ENCODE measurements at regions of chr6 and their contacts with region 1.

Region 1: DNA sequence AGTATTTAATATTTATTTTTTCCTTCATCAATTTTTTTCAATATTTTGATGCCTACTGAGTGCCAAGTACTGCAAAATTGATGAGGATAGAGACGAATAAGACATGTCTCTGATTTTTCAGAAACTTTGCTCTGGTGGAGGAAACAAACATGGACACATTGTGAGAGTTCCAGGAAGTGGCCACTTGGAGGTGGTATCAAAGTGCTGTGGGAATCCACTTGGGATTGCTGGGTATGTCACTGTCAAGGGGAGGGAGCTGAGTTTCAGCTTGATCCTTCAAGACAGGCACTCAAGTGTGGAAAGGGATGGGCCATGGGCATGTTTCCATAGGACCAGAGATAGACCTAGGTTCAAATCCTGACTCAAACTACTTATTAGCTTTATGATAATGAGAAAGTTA is 24.5 kb upstream of the ABCC10 start:
- DNase-seq: no peak
- ATAC-seq: no peak
- H3K4me3 Mint-ChIP-seq: no peak overlapping the region
- H3K27ac Mint-ChIP-seq: no peak overlapping the region
- H3K4me1 Mint-ChIP-seq: peaks cover 1% of the 10 kb centered on the region
- H3K27me3 Mint-ChIP-seq: peaks cover 44% of the 10 kb centered on the region

Region 2: GRCh38 chr6:41622206-41622958 is 1780.4 kb before region 1 on chr6:
- CTCF ChIA-PET with region 1: no interaction called
- POLR2A ChIA-PET with region 1: no interaction called
- DNase-seq: no peak
- ATAC-seq: no peak
- H3K4me3 Mint-ChIP-seq: no peak overlapping the region
- H3K27ac Mint-ChIP-seq: no peak overlapping the region
- H3K4me1 Mint-ChIP-seq: peaks cover 10% of the 10 kb centered on the region
- H3K27me3 Mint-ChIP-seq: peaks cover 31% of the 10 kb centered on the region

Region 3: DNA sequence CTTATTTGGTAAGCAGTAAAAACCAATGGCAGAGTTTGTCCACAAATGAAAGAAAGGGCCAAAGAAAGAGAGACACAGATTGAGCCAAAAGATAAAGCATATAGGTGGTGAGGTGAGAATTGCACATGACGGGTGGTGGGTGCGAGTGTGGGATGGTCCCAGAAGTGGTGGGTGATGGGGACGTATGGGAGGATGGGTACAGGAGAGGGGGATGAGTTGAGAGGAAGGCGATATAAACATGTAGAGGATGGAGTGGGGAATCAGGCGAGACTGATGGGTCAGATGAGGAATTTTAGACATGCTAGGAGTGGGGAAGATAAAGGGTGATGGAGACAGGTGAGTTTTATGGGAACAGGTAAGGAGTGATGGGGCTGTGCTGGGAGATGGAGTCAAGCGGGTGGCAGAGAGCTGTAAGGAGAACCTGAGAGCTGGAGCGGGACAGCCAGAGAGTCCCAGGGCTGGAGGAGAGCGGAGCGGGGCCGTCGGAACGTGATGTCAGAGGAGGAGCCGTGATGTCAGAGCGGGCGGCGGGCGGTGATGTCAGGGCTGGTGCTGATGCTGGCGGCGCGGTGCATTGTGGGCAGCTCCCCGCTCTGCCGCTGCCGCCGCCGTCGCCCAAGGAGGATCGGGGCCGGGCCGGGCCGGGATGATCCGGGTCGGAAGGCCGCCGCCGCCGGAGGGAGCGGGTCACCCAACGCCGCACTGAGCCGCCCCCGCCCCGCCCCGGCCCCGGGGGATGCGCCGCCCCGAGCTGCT is 159.7 kb before region 1 on chr6 and contains the start of gene TTBK1:
- CTCF ChIA-PET with region 1: no interaction called
- POLR2A ChIA-PET with region 1: no interaction called
- DNase-seq: peak; percentile 49
- ATAC-seq: no peak
- H3K4me3 Mint-ChIP-seq: no peak within 1 kb of the TSS
- H3K27ac Mint-ChIP-seq: no peak within 1 kb of the TSS
- H3K4me1 Mint-ChIP-seq: peaks cover 20% of the 10 kb centered on the region
- H3K27me3 Mint-ChIP-seq: peaks cover 38% of the 10 kb centered on the region
- total RNA-seq, gene TTBK1: not detected

Region 4: GRCh38 chr6:43263314-43264178 is 139.3 kb before region 1 on chr6:
- CTCF ChIA-PET with region 1: interaction called, 10 read pairs
- POLR2A ChIA-PET with region 1: no interaction called
- DNase-seq: peak; percentile 86
- ATAC-seq: peak; percentile 94
- H3K4me3 Mint-ChIP-seq: no peak overlapping the region
- H3K27ac Mint-ChIP-seq: no peak overlapping the region
- H3K4me1 Mint-ChIP-seq: no peaks in the 10 kb centered on the region
- H3K27me3 Mint-ChIP-seq: peaks cover 22% of the 10 kb centered on the region

Region 5: DNA sequence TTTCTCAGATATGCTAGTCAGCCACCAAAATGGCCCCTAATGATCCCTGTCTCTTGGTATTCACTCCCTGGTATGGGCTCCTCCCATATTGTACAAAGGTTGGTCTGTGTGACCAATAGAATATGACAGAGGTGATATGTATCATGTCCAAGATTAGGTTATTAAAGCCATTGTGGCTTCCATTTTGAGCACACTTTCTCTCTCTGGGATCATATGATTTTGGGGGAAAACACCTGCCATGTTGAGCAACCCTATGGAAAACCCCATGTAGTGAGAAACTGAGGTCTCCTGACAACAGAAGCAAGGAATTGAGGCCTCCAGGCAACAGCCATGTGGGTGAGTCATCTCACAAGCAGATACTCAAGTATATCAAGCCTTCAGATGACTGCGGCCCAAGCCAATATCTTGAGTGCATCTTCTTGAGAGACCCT is 26.3 kb before region 1 on chr6:
- CTCF ChIA-PET with region 1: interaction called, 11 read pairs
- POLR2A ChIA-PET with region 1: no interaction called
- DNase-seq: no peak
- ATAC-seq: peak; percentile 44
- H3K4me3 Mint-ChIP-seq: no peak overlapping the region
- H3K27ac Mint-ChIP-seq: no peak overlapping the region
- H3K4me1 Mint-ChIP-seq: peaks cover 17% of the 10 kb centered on the region
- H3K27me3 Mint-ChIP-seq: peaks cover 38% of the 10 kb centered on the region